Activated naive CD4-positive, alpha-beta T cell treated with anti-CD3 and anti-CD28 coated beads, Interleukin-2, amount 10 ng/mL, durations not matched to agents 7 days and 5 days (primary cell): ENCODE measurements at regions of chr17 and their contacts with region 1.

Region 1: DNA sequence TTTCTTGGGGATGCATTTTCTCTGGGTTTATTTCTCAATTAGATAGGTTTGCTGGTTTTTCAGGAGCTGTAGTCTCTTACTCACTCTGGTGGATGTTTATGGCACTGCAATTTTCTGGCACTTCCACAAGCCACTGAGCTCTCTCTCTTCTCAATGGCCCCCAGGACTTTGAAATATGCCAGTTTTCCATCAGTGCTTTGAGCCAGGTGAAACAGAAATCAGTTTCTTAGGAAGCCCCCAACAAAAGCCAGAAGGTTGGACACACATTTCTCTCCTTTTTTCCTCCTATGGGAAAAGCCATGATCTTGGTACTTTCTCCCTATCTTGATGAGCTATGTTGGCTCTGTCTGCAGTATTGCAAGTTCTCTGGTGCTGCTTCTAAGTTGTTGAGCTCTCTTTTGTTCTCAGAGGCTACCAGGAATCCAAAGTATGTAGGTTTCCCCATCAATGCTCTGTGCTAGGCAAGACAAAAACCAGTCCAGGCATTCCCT is 90.7 kb upstream of the SMIM36 start:
- DNase-seq: peak; percentile 33
- H3K4me3 Mint-ChIP-seq: no peak overlapping the region
- H3K27ac Mint-ChIP-seq: no peak overlapping the region
- H3K4me1 Mint-ChIP-seq: peaks cover 4% of the 10 kb centered on the region
- H3K27me3 Mint-ChIP-seq: peaks cover 7% of the 10 kb centered on the region

Region 2: DNA sequence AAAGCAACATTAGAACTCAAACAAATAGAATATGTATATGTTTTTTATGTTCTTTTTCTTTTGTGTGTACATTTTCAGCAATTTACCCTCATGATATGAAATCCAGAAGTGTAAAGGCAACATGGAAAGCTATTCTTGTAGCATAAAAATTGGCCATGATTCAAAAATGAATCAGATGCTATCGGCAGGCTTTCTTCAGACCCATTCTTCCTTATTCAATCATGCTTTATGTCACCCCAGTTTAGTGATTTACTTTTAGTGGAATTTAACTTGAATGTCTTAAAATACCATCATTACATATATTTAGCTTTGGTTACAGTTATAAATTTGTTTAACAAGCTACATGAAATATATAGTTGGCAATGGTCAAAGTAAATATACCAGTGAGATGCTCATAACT is 69.2 kb before region 1 on chr17:
- CTCF ChIA-PET with region 1: interaction called, 139 read pairs
- DNase-seq: no peak
- H3K4me3 Mint-ChIP-seq: no peak overlapping the region
- H3K27ac Mint-ChIP-seq: no peak overlapping the region
- H3K4me1 Mint-ChIP-seq: no peaks in the 10 kb centered on the region
- H3K27me3 Mint-ChIP-seq: peaks cover 7% of the 10 kb centered on the region

Region 3: GRCh38 chr17:55584050-55584685 is 17.8 kb before region 1 on chr17:
- CTCF ChIA-PET with region 1: no interaction called
- DNase-seq: no peak
- H3K4me3 Mint-ChIP-seq: no peak overlapping the region
- H3K27ac Mint-ChIP-seq: no peak overlapping the region
- H3K4me1 Mint-ChIP-seq: peaks cover 8% of the 10 kb centered on the region
- H3K27me3 Mint-ChIP-seq: no peaks in the 10 kb centered on the region

Region 4: DNA sequence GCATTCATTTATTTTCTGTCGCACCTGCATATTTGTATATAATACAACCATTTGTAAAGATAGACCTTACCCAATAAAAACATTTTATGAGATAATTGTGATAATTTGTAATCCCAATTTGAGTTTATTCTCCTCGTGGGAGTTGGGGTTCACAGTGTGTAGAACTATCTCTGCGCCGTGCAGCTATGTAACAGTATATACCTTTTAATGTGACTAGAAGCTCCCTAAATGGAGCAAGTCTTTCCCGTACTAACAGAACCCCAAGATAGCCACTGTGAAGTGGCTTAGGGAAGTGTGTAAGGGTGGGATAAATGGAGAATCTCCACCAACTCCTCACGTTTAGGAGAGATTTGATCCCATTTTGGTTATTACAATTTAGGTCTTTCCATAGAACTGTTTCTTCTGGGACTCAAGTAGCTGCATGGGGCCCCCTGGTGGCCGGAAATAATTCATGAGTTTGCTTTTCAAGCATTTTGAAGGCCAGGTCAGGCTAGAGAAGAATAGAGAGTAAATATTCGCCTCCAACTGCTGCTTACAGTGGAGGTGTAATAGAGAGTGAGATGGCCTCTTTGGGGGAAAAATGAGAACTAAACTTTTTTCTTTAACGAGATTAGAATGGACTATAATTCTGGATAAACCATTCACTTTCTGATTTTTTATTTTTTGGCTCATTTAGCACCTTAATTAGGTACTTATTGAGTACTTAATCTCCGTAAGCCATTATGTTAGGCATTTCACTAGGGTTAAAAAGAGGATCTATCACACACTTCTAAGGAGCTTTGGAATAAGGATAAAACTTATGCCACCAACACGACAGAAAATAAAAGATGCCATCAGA is 116.2 kb after region 1 on chr17:
- CTCF ChIA-PET with region 1: interaction called, 10 read pairs
- DNase-seq: peak; percentile 75
- H3K4me3 Mint-ChIP-seq: no peak overlapping the region
- H3K27ac Mint-ChIP-seq: no peak overlapping the region
- H3K4me1 Mint-ChIP-seq: no peaks in the 10 kb centered on the region
- H3K27me3 Mint-ChIP-seq: peaks cover 25% of the 10 kb centered on the region